ENCODE measurements at regions of chr11 and their contacts with region 1.

Region 1: GRCh38 chr11:94613120-94613519 is 46.0 kb downstream of the PIWIL4 start:
- DNase-seq: no peak
- ATAC-seq: no peak
- H3K4me3 ChIP-seq: no peak overlapping the region
- H3K4me3 Mint-ChIP-seq: no peak overlapping the region
- H3K27ac ChIP-seq: no peak overlapping the region
- H3K27ac Mint-ChIP-seq: no peak overlapping the region
- H3K4me1 ChIP-seq: no peaks in the 10 kb centered on the region
- H3K4me1 Mint-ChIP-seq: no peaks in the 10 kb centered on the region
- H3K27me3 ChIP-seq: no peaks in the 10 kb centered on the region
- H3K27me3 Mint-ChIP-seq: no peaks in the 10 kb centered on the region

Region 2: GRCh38 chr11:94417386-94417987 is 195.6 kb before region 1 on chr11:
- CTCF ChIA-PET with region 1: no interaction called
- POLR2A ChIA-PET with region 1: no interaction called
- DNase-seq: peak in 1 of 35 experiments; percentile 3
- ATAC-seq: no peak
- H3K4me3 ChIP-seq: no peak overlapping the region
- H3K4me3 Mint-ChIP-seq: no peak overlapping the region
- H3K27ac ChIP-seq: no peak overlapping the region
- H3K27ac Mint-ChIP-seq: no peak overlapping the region
- H3K4me1 ChIP-seq: no peaks in the 10 kb centered on the region
- H3K4me1 Mint-ChIP-seq: no peaks in the 10 kb centered on the region
- H3K27me3 ChIP-seq: no peaks in the 10 kb centered on the region
- H3K27me3 Mint-ChIP-seq: no peaks in the 10 kb centered on the region

Region 3: GRCh38 chr11:95165638-95166037 is 552.5 kb after region 1 on chr11:
- CTCF ChIA-PET with region 1: interaction called in 1 of 2 experiments, 15 read pairs
- POLR2A ChIA-PET with region 1: no interaction called
- DNase-seq: no peak
- ATAC-seq: no peak
- H3K4me3 ChIP-seq: no peak overlapping the region
- H3K4me3 Mint-ChIP-seq: no peak overlapping the region
- H3K27ac ChIP-seq: no peak overlapping the region
- H3K27ac Mint-ChIP-seq: peak overlapping the region in 1 of 2 donors; percentile 78
- H3K4me1 ChIP-seq: no peaks in the 10 kb centered on the region
- H3K4me1 Mint-ChIP-seq: peaks cover 14 to 36% (median 26%) of the 10 kb centered on the region in 3 donors
- H3K27me3 ChIP-seq: no peaks in the 10 kb centered on the region
- H3K27me3 Mint-ChIP-seq: no peaks in the 10 kb centered on the region